ENCODE measurements at regions of chr7 and their contacts with region 1.

Region 1: GRCh38 chr7:151386301-151387132 is 23.3 kb downstream of the WDR86 start:
- DNase-seq: peak in 1 of 2 donors; percentile 33
- ATAC-seq: no peak
- H3K4me3 ChIP-seq: no peak overlapping the region
- H3K27ac ChIP-seq: peak overlapping the region in 1 of 2 donors; percentile 23
- H3K4me1 ChIP-seq: no peaks in the 10 kb centered on the region
- H3K27me3 ChIP-seq: no peaks in the 10 kb centered on the region

Region 2: GRCh38 chr7:151424461-151425198 is 38.1 kb after region 1 on chr7:
- intact Hi-C with region 1: loop called in 1 of 2 experiments (anchors 5 kb)
- DNase-seq: no peak
- ATAC-seq: no peak
- H3K4me3 ChIP-seq: no peak overlapping the region
- H3K27ac ChIP-seq: no peak overlapping the region
- H3K4me1 ChIP-seq: no peaks in the 10 kb centered on the region
- H3K27me3 ChIP-seq: no peaks in the 10 kb centered on the region